Posterior cingulate gyrus (tissue), 11 donors: ENCODE measurements at regions of chr2 and their contacts with region 1.

Region 1: DNA sequence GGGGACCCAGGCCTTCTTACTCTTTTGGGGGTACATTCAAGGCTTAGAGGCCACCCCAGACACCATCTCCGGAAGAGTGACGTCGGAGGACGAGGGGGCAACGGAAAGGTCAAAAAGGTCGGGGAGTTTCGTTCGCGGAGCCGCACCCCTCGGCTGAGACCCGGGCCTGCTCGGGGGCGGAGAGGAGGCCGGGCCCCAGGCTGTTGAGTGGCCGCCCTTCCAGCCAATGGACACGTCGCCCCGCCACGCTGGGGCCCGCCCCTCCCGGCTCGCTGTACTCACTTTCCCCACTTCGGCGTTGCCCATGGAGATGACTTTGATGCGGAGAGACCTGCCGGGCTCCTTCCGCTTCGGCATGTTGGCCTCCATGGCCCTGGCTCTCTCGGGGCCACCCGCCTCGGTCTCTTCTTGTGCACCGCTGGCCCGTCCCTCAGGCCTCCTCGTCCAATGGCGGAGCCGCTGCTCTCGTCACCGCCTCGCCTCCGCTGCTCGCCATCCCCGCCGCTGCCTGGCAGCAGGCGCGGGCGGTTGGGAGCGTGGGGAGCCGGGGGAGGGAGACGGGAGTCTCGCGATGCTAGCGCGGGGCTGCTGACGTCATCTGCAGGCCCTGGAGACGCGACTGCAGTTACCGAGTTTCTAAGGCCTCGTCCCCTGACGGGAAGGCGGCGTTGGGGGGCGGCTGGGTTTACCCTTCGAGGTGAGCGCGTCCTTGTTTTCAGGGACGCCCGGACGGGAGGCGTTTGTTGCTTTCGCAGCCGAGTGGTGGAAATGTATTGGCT is at the start of gene DNAJC27:
- DNase-seq: peak; percentile 94 to 100 (median 98)

Region 2: GRCh38 chr2:24920098-24920808 is 51.5 kb before region 1 on chr2 and contains the start of gene ADCY3:
- intact Hi-C with region 1: loop called (anchors 5 kb)
- DNase-seq: peak; percentile 43 to 92 (median 66)

Region 3: DNA sequence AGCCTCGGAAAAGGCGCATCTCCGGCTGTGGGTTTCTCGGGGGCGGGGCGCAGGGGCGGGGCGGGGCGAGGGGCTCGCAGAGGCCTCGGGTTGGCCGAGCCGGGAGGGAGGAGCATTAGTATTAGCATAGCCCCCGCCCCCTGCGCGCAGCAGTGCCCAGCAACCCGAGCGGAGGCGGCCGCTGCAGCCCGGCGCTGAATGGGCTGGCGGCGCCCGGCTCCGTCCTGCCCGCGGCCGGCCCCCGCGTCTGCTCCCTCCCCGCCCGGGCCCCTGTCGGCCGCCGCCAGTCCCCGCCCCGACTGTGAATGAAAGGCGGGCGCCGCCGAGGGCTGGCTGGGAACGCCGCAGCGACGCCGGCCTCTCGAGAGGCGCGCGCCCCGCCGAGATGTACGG is 70.2 kb after region 1 on chr2 and contains the start of gene EFR3B:
- intact Hi-C with region 1: no loop called
- DNase-seq: peak; percentile 90 to 99 (median 95)

Region 4: DNA sequence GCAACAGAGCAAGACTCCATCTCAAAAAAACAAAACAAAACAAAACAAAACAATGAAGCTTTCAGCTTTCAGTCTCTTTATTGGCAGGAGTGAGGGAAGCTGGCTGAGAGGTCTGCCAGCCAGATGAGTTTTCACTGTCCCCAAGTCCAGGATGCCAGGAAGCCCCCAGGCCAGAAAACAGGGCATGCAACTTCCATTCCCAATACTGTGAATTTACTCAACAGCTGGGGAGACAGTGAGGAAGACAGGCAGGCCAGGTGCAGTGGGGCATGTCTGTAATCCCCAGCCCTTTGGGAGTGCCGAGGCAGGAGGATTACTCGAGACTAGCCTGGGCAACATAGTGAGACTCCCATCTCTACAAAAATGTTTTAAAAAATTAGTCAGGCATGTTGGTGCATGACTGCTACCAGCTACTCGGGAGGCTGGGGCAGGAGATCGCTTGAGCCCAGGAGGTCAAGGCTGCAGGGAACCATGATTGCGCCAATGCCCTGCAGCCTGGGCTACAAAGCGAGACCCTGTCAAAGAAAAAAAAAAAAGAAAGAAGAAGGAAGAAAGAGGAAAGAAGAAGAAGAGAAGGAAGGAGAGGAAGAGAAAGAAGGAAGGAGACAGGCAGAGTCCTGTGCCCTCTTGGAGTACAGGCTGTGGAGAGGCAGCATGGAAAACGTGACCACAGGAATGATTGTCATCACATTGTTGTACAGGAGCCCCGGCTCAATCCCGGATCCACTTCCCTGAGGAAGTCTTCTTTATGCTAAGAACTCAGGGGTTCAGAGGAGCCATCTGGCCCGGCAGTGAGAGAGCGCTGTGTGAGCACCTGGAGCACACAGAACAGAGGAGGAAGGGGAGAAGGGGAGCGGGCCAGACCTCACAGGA is 225.8 kb after region 1 on chr2:
- intact Hi-C with region 1: loop called (anchors 2 kb)
- DNase-seq: peak in 2 of 10 donors; percentile 39 to 74